Tibial artery (tissue), 4 donors: ENCODE measurements at regions of chr6 and their contacts with region 1.

Region 1: GRCh38 chr6:43702534-43703440 is 15.2 kb upstream of the MRPS18A start:
- DNase-seq: peak; percentile 95 to 98
- H3K4me3 ChIP-seq: peak overlapping the region in 1 of 2 donors; percentile 2
- H3K27ac ChIP-seq: peak overlapping the region; percentile 79 to 82
- H3K4me1 ChIP-seq: peaks cover 0 to 37% (median 26%) of the 10 kb centered on the region in 4 donors
- H3K27me3 ChIP-seq: no peaks in the 10 kb centered on the region
- CTCF ChIP-seq: peak in 1 of 2 experiments; percentile 8

Region 2: DNA sequence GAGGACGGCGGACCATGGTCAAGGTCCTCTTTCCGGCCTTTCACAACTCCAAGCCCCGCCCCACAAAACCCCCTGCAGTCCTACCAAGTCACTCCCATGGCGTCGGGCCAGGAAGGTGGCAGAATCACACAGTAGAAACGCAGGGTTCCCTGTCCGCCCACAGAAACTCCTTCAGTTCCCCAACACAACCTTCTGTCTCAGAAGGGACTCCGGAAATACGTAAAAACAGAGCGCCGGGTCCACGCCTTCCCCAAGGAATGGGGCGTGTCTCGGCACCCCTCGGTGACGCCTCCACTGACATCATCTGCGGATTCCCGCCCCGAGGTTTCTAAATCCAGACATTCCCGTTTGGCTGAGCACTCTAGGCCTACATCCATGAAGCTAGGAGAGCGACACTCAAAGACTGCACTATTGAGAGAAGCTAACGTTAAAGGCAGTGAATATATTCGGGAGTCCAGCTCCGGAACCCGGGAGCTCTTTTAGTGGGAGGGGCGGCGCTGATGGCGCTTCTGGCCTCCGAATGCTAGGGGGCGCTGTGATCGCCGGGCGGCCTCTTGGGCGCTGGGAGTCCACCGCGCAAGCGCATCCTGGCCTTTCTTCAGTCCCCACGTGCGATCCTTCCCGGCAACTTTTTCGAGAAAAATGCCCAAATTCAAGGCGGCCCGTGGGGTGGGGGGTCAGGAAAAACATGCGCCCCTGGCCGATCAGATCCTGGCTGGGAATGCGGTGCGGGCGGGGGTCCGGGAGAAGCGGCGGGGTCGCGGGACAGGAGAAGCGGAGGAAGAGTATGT is 1781.7 kb before region 1 on chr6 and contains the starts of genes BYSL and MED20:
- intact Hi-C with region 1: no loop called
- DNase-seq: peak; percentile 92 to 94
- H3K4me3 ChIP-seq: peak within 1 kb of the TSS; percentile 80 to 81
- H3K27ac ChIP-seq: peak within 1 kb of the TSS; percentile 87 to 93
- H3K4me1 ChIP-seq: peaks cover 0 to 56% (median 38%) of the 10 kb centered on the region in 4 donors
- H3K27me3 ChIP-seq: no peaks in the 10 kb centered on the region
- CTCF ChIP-seq: peak; percentile 96 to 98

Region 3: DNA sequence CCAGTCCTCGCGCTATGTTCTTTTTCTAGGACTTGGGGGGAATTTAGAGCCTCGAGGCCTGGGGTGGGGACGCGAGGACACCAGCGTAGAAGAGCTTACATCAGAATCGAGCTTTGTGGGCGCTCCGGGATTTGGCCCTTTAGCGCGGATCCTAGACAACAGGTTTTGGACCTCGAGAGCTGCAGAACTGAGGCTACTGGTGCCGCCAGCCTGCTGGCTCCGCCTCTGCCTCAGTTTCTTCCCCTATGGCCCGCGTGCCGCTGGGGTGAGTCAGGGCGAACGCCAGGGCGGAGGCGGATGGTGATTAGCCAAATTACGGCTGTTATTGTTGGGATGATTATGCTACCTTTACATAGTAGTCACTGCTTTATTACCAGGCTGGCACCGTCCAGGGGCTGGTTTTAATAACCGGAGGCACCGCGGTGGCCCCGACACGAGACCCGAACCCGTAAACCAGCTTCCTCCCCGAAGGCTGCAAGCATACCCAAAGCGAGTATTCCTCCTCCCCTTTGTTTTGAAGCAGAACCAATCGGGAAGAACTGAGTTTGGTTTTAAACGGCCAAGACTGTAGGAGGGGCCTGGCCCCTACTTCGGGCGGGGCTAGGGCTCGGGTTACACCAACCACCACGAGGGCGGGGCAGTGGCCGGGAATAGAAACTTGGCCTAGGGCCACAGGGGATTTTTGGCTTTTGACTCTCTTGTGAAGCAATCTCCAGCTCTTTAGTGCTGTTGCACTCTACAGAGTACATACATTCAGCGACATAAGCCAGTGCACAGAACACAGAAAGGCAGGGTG is 73.1 kb before region 1 on chr6:
- intact Hi-C with region 1: loop called (anchors 5 kb)
- DNase-seq: peak; percentile 98
- H3K4me3 ChIP-seq: peak overlapping the region; percentile 93 to 99
- H3K27ac ChIP-seq: peak overlapping the region; percentile 93 to 95
- H3K4me1 ChIP-seq: peaks cover 0 to 25% (median 21%) of the 10 kb centered on the region in 4 donors
- H3K27me3 ChIP-seq: no peaks in the 10 kb centered on the region
- CTCF ChIP-seq: peak in 1 of 2 experiments; percentile 3